Ascending aorta (tissue), 2 donors: ENCODE measurements at regions of chr15 and their contacts with region 1.

Region 1: DNA sequence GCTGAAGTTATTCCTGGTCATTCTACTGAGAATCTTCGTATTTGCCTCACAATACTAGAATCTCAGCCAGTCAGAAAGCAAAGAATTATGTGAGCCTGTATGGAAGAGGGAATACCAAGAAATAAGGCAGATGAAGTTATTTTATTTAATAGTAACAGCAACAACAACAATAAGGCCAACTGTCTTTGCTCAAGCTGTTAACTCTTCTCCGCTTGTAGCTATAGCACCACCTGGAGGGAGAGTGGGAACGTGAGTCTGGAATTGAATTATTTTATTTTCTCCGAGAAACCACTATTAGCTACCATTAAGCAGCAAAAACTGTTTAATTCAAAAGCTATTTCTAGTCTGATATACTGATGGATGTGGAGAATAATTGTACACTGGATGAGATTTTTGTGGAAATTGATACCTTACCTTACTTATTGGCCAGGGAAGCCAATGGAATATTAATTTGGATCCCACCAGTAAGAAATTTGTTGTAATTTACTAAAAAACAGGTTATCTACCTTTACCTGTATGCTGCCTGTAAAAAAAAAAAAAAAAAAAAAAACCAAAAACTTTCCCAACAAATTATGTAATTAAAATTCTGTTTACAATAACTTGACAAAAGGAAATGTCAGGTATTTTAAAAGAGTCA is 50.1 kb downstream of the CALML4 start:
- DNase-seq: no peak
- H3K4me3 ChIP-seq: no peak overlapping the region
- H3K27ac ChIP-seq: no peak overlapping the region
- H3K4me1 ChIP-seq: peaks cover 0 to 18% of the 10 kb centered on the region in 2 donors
- H3K27me3 ChIP-seq: no peaks in the 10 kb centered on the region
- CTCF ChIP-seq: peak; percentile 32 to 78 (median 74)

Region 2: DNA sequence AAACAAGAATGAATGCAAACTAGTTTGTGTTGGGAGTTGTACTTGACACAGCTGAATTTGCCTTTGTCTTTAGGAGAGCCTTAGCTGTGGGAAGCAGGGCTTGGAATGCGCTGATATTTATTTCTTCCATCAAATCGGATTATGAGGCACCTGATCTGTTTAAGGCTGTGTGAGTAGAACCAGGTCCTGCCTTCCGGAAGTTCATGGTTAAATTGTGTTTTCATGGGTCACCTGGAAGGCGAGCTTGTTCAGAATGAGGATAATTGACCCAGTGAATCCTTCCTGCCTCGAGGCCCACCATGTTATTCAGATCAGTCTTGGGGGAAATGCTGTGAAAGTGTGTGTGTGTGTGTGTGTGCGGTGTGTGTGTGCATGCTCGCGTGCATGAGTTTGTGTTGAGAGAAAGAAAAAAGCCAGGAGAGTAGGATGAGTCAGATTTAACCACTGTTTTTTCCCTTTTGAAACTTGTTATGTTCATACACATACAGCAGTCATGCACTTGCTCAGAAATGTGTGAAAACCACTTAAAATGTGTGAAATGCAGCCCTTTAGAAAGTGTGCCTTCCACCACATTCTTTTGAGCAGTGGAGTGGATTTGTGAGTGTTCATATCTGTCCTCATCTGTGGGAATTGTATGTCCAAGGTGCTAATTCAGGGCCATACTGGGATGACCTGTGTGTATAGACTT is 1053.0 kb before region 1 on chr15:
- intact Hi-C with region 1: no loop called
- DNase-seq: no peak
- H3K4me3 ChIP-seq: no peak overlapping the region
- H3K27ac ChIP-seq: no peak overlapping the region
- H3K4me1 ChIP-seq: peaks cover 26 to 45% of the 10 kb centered on the region in 2 donors
- H3K27me3 ChIP-seq: no peaks in the 10 kb centered on the region
- CTCF ChIP-seq: no peak

Region 3: DNA sequence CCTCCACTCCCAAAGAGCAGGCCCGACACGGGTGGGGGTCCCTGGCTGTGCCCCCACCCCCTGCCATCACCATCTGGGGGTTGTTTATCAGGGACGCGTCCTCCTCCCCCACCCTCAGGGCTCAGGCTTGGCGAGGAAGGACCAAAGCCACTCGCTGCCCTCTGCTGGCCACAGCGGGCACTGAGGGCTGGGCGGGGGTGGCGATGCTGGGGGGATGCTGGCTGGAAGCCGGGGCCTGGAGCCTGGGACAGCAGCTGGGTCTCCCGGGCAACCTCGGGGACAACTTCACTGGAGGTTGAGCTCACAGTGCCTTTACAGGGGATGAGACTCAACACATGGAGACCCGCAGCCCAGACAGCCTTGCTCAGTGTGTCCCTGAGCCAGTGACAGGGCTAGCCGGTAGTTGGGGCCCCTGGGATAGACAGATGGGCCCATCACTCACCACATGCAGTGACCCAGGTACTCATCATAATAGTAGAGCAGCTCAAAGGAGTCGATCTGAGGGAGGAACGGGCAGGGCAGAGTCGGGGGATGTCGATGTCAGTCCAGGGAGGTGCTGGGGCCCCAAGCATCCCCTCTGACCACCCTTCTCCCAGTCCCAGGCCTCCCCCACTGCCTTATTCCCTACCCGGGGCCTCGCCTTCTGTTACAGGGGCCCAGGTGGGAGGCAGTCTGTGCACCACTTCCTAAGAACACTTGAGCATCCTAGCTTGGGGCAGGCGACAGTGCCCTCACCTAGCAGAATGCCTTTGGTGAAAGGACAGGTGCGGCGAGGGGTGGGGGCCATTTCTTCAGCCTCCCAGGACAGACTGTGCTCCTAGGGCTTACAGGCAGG is 56.0 kb after region 1 on chr15:
- intact Hi-C with region 1: loop called (anchors 5 kb)
- DNase-seq: peak in 1 of 2 donors; percentile 82
- H3K4me3 ChIP-seq: peak overlapping the region; percentile 35 to 51
- H3K27ac ChIP-seq: no peak overlapping the region
- H3K4me1 ChIP-seq: peaks cover 3 to 10% of the 10 kb centered on the region in 2 donors
- H3K27me3 ChIP-seq: no peaks in the 10 kb centered on the region
- CTCF ChIP-seq: peak; percentile 88 to 98 (median 93)

Region 4: GRCh38 chr15:68383161-68384074 is 228.4 kb after region 1 on chr15:
- intact Hi-C with region 1: no loop called
- DNase-seq: peak in 1 of 2 donors; percentile 62
- H3K4me3 ChIP-seq: no peak overlapping the region
- H3K27ac ChIP-seq: peak overlapping the region; percentile 73 to 80
- H3K4me1 ChIP-seq: peaks cover 8 to 27% of the 10 kb centered on the region in 2 donors
- H3K27me3 ChIP-seq: no peaks in the 10 kb centered on the region
- CTCF ChIP-seq: peak; percentile 55 to 64 (median 61)